ENCODE measurements at regions of chr11 and their contacts with region 1.

Region 1: DNA sequence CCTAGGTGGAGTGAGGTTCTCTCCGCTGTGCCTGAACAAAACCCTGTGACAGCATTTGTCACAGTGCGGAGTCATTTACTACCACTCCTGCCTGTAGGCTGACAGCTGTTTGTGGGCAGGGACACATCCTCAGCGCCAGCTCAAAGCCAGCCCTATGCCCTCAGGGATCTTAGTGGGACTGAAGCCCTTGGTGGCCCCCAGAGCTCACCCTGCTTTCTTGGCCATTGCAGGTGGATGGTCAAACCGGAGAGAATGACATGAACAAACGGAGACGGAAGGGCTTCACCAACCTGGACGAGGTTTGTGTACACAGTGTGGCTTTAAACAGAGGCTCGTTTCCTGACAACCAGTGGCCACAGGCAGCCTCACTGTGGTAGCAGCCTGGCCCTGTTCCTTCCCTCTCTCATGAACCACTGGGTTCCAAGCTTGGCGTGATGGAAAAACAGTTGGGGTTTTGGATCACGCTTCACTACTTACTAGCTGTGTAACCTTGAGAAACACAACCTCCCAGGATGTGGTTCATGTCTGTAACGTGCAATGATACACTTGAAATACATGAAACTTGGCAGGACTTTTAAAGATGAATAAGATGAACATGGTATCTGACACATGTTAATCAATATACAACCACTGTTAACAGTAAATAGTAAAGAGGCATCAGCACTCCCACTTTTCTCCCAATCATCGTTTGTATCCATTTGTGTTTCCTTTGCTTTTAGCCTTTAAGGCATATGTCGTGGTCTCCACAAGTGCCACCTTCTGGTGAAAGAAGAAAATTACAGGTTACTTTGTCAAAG is 125.8 kb downstream of the MICAL2 start:
- DNase-seq: peak; percentile 65 to 74 (median 67)
- H3K4me3 ChIP-seq: peak overlapping the region in 1 of 2 donors; percentile 0
- H3K4me3 Mint-ChIP-seq: peak overlapping the region; percentile 6 to 86 (median 76)
- H3K27ac ChIP-seq: peak overlapping the region; percentile 46
- H3K27ac Mint-ChIP-seq: peak overlapping the region; percentile 76 to 96 (median 93)
- H3K4me1 ChIP-seq: peaks cover 24% of the 10 kb centered on the region
- H3K4me1 Mint-ChIP-seq: peaks cover 15 to 26% (median 20%) of the 10 kb centered on the region in 4 donors
- H3K27me3 ChIP-seq: no peaks in the 10 kb centered on the region
- H3K27me3 Mint-ChIP-seq: no peaks in the 10 kb centered on the region

Region 2: GRCh38 chr11:12052676-12053605 is 183.2 kb before region 1 on chr11:
- CTCF ChIA-PET with region 1: interaction called, 149 read pairs
- POLR2A ChIA-PET with region 1: interaction called, 5 read pairs
- intact Hi-C with region 1: no loop called
- DNase-seq: no peak
- H3K4me3 ChIP-seq: no peak overlapping the region
- H3K4me3 Mint-ChIP-seq: no peak overlapping the region
- H3K27ac ChIP-seq: no peak overlapping the region
- H3K27ac Mint-ChIP-seq: peak overlapping the region in 3 of 7 donors; percentile 17 to 36 (median 22)
- H3K4me1 ChIP-seq: no peaks in the 10 kb centered on the region
- H3K4me1 Mint-ChIP-seq: peaks cover 0 to 6% (median 0%) of the 10 kb centered on the region in 4 donors
- H3K27me3 ChIP-seq: no peaks in the 10 kb centered on the region
- H3K27me3 Mint-ChIP-seq: no peaks in the 10 kb centered on the region

Region 3: DNA sequence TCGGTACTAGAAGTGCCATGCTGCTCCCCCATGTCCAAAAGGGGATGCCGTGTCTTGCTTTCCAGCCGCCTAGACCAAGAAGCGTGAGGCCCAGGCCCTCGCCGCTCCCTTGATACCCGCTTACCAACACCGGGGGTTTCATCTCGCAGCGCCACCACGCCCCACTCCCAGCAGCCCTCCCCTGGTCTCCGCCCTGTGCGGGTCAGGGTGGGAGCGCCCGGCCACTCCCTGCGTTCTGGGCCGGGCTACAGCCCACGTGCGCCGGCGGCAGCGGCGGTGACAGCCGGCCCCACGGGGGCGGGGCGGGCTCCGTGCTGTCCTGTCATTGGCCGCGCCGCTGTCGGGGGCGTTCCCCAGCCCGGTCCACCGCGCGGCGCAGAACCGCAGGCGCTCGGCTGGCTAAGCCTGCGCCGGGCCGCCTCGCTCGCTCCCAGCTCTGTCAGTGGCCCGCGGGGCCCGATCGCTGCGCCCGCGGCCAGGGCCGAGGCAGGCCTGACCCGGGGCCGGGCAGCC is 125.9 kb before region 1 on chr11 and contains the start of gene MICAL2:
- CTCF ChIA-PET with region 1: interaction called, 17 read pairs
- POLR2A ChIA-PET with region 1: interaction called, 10 read pairs
- intact Hi-C with region 1: loop called (anchors 1 kb)
- DNase-seq: peak; percentile 82 to 86 (median 84)
- H3K4me3 ChIP-seq: peak within 1 kb of the TSS; percentile 60 to 61
- H3K4me3 Mint-ChIP-seq: peak within 1 kb of the TSS; percentile 82 to 90 (median 85)
- H3K27ac ChIP-seq: peak within 1 kb of the TSS; percentile 32
- H3K27ac Mint-ChIP-seq: peak within 1 kb of the TSS; percentile 63 to 92 (median 82)
- H3K4me1 ChIP-seq: peaks cover 43% of the 10 kb centered on the region
- H3K4me1 Mint-ChIP-seq: peaks cover 17 to 34% (median 23%) of the 10 kb centered on the region in 4 donors
- H3K27me3 ChIP-seq: no peaks in the 10 kb centered on the region
- H3K27me3 Mint-ChIP-seq: no peaks in the 10 kb centered on the region
- total RNA-seq, gene MICAL2: 33.3 to 38.8 TPM

Region 4: GRCh38 chr11:12164061-12165014 is 71.8 kb before region 1 on chr11:
- CTCF ChIA-PET with region 1: interaction called, 16 read pairs
- POLR2A ChIA-PET with region 1: no interaction called
- intact Hi-C with region 1: loop called (anchors 1 kb)
- DNase-seq: no peak
- H3K4me3 ChIP-seq: no peak overlapping the region
- H3K4me3 Mint-ChIP-seq: no peak overlapping the region
- H3K27ac ChIP-seq: no peak overlapping the region
- H3K27ac Mint-ChIP-seq: peak overlapping the region in 1 of 7 donors; percentile 45
- H3K4me1 ChIP-seq: peaks cover 7% of the 10 kb centered on the region
- H3K4me1 Mint-ChIP-seq: peaks cover 2 to 10% (median 7%) of the 10 kb centered on the region in 4 donors
- H3K27me3 ChIP-seq: no peaks in the 10 kb centered on the region
- H3K27me3 Mint-ChIP-seq: no peaks in the 10 kb centered on the region

Region 5: GRCh38 chr11:12224537-12224893 is 11.6 kb before region 1 on chr11:
- CTCF ChIA-PET with region 1: interaction called, 81 read pairs
- POLR2A ChIA-PET with region 1: interaction called, 54 read pairs
- intact Hi-C with region 1: loop called (anchors 1 kb)
- DNase-seq: peak; percentile 88 to 94 (median 90)
- H3K4me3 ChIP-seq: peak overlapping the region; percentile 30 to 48
- H3K4me3 Mint-ChIP-seq: peak overlapping the region; percentile 73 to 87 (median 78)
- H3K27ac ChIP-seq: peak overlapping the region; percentile 60
- H3K27ac Mint-ChIP-seq: peak overlapping the region; percentile 93 to 99 (median 97)
- H3K4me1 ChIP-seq: peaks cover 49% of the 10 kb centered on the region
- H3K4me1 Mint-ChIP-seq: peaks cover 41 to 64% (median 52%) of the 10 kb centered on the region in 4 donors
- H3K27me3 ChIP-seq: no peaks in the 10 kb centered on the region
- H3K27me3 Mint-ChIP-seq: no peaks in the 10 kb centered on the region